ENCODE measurements at regions of chr1 and their contacts with region 1.

Region 1: DNA sequence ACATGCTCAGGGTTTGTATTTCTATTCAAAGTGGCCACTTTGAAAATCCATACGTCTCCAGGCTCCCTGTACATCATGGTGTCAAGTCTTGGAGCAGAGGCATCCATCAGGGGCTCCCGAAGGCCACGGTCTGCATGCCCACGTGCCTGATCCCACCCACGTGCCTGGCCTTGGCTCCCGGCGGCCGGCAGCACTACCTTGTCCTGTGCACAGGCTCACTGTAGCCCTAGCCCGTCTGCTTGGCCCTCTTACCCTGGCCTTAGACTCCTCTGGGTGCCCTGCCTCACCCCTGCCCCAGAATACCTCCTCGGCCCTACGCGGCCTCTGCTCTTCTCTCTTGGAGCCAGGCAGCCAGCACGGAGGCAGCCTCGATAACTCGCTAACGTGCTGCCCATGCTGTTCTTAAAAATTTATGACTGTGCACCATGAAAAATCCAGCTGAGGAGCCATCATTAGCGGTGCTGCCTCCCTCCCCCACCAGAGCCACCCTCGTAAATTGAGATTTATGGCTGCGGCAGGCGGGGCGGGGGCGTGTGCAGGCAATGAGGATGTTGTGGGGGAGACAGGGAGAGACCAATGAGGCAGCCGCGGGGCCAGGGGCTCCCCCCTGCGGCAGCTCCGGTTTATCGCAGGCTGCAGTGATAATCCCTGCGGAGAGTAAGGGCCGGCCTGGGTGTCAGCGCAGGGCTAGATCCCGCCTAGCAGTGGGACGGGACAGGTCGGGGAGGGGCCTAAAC is 24.6 kb downstream of the DMAP1 start:
- DNase-seq: no peak
- H3K4me3 ChIP-seq: no peak overlapping the region
- CTCF ChIP-seq: peak; percentile 91

Region 2: DNA sequence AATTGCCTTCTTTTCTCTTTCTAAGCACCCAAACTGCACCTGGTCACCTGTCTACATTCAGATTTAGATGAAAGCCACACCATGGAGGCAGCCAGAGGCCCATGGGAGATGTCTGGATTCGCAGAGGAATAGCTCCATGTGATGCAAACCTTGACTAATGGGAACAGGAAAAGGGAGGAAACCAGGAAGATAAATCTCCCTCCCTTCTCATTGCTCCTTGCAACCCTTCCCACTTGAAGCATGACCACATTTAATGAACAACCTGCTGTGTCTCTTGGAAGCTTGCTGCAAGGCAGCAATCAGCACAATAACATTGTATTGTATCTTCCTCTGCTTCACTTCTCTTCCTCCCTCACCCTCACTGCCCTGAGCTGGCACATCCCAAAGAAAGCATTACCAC is 161.8 kb before region 1 on chr1:
- CTCF ChIA-PET with region 1: no interaction called
- POLR2A ChIA-PET with region 1: no interaction called
- DNase-seq: no peak
- H3K4me3 ChIP-seq: no peak overlapping the region
- CTCF ChIP-seq: no peak

Region 3: GRCh38 chr1:44227211-44227610 is 10.7 kb before region 1 on chr1:
- CTCF ChIA-PET with region 1: interaction called, 53 read pairs
- POLR2A ChIA-PET with region 1: interaction called, 3 read pairs
- DNase-seq: no peak
- H3K4me3 ChIP-seq: no peak overlapping the region
- CTCF ChIP-seq: no peak

Region 4: DNA sequence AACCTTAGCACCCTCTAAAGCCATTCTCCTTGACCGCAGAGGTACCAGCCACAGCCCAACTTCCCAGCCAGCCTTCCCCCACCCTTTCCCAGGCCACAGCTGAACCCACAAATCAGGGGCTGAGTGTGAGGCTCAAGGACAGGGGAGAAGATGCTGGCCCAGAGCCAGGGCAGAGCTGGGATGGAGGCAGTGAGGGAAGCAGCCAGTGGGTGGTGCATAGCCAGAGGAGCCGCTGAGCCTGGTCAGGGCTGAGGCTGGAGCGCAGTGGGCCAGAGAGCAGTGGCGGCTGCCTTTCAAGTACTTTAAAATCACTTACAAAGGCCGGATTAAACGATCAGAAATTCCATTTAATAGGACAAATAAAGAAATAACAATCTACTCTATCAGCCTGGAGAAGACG is 11.7 kb after region 1 on chr1:
- CTCF ChIA-PET with region 1: interaction called, 24 read pairs
- POLR2A ChIA-PET with region 1: no interaction called
- DNase-seq: no peak
- H3K4me3 ChIP-seq: no peak overlapping the region
- CTCF ChIP-seq: no peak

Measured in AG04449 (cell line).